ENCODE measurements at regions of chr19 and their contacts with region 1.

Region 1: DNA sequence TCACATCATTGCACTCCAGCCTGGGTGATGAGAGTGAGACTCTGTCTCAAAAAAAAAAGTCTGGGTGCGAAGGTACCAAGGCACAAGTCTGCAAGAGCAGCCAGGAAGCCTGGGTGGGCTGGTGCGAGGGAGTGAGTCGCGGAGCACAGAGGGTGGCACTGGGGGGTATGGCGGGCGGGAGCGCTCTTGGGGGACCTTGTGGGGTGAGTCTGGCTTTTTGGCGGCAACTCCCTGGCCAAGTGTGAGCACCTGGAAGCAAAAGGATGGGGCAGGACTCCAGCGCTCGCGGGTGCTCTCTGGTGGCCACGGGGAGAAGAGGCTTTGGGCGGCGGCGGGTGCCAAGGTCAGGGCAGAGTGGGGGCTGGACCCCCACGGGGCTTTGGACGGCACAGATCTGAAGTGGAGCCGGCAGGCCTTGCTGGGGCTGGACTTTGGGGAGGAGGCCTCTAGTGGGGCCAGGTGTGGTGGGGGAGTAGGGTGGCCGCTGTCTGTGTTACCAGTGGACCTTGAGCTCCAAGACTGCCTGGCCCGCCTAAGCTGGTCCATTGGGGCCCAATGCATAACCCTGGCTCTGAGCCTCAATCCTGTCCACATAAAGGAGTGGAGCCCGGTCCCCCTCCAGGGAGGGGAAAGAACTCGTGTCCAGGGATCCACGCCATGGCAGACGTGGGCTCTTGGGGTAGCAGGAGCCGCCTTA is 1.6 kb downstream of the P2RY11 start:
- DNase-seq: peak; percentile 62
- H3K4me3 Mint-ChIP-seq: peak overlapping the region; percentile 68
- H3K27ac Mint-ChIP-seq: peak overlapping the region; percentile 91
- H3K4me1 Mint-ChIP-seq: peaks cover 50% of the 10 kb centered on the region
- H3K27me3 Mint-ChIP-seq: no peaks in the 10 kb centered on the region

Region 2: DNA sequence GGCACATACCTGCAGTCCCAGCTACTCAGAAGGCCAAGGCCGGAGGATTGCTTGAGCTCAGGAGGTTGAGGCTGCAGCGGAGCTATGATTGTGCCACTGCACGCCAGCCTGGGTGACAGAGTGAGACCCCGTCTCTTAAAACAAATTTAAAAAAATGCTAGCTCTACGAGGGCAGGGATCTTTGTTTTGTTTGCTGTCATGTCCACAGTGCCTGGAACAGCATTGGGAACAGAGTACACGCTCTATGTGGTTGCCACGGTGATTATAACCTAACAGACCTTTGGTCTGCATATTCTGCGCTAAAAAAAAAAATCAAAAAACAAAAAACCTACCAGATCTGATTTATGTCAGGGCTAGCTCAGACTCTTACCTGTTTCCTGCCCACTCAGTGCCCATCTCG is 29.1 kb before region 1 on chr19:
- CTCF ChIA-PET with region 1: no interaction called
- POLR2A ChIA-PET with region 1: no interaction called
- DNase-seq: no peak
- H3K4me3 Mint-ChIP-seq: no peak overlapping the region
- H3K27ac Mint-ChIP-seq: no peak overlapping the region
- H3K4me1 Mint-ChIP-seq: peaks cover 13% of the 10 kb centered on the region
- H3K27me3 Mint-ChIP-seq: peaks cover 2% of the 10 kb centered on the region

Region 3: GRCh38 chr19:10100163-10100785 is 12.8 kb before region 1 on chr19:
- CTCF ChIA-PET with region 1: interaction called, 12 read pairs
- POLR2A ChIA-PET with region 1: interaction called, 3 read pairs
- DNase-seq: no peak
- H3K4me3 Mint-ChIP-seq: no peak overlapping the region
- H3K27ac Mint-ChIP-seq: peak overlapping the region; percentile 83
- H3K4me1 Mint-ChIP-seq: peaks cover 53% of the 10 kb centered on the region
- H3K27me3 Mint-ChIP-seq: peaks cover 1% of the 10 kb centered on the region

Region 4: DNA sequence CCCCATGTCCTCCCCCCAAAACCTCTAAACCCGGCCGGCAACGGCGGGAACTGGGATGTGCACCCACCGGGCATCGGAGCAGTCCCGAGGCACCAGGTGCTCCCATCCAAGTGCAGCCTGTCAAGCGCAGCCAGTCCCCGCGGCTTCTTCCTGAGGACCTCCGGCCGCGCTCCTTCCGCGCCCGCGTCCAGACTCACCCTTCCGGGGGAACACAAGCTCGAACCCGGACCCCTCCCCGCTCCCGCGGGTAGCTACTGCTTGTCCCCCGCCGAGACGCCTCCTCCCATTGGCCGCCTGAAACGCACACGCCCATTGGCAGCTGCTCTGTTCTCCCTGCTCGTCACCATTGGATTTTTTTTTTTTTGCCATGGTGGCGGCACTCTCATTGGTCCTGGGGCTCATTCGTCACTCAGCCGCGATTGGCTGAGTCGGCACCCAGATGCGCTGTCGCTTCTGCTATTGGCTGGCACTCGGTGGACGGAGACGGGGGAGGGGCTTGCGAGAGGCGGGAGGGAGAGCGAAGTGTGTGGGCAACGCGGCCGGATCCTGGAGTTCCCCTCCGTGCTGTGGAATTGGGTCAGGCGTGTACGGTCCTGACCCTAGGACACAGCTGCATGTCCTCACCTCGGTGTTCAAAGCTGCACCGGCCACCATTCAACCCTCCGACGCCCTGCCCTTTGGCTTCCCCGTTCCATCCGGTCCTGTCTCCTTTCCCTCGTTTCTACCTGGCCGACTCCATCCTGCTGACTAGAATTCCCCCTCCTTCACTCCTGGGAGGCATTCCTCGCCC is 267.5 kb after region 1 on chr19 and contains the start of gene TYK2:
- CTCF ChIA-PET with region 1: no interaction called
- POLR2A ChIA-PET with region 1: no interaction called
- DNase-seq: peak; percentile 97
- H3K4me3 Mint-ChIP-seq: peak within 1 kb of the TSS; percentile 85
- H3K27ac Mint-ChIP-seq: peak within 1 kb of the TSS; percentile 94
- H3K4me1 Mint-ChIP-seq: peaks cover 21% of the 10 kb centered on the region
- H3K27me3 Mint-ChIP-seq: no peaks in the 10 kb centered on the region
- total RNA-seq, gene TYK2: 251 to 263 TPM